ENCODE measurements at regions of chr20 and their contacts with region 1.

Region 1: GRCh38 chr20:8602389-8603116 is 466.3 kb upstream of the PLCB4 start:
- DNase-seq: no peak
- ATAC-seq: peak; percentile 68
- H3K4me3 Mint-ChIP-seq: peak overlapping the region; percentile 82
- H3K27ac Mint-ChIP-seq: peak overlapping the region; percentile 90
- H3K4me1 Mint-ChIP-seq: peaks cover 29% of the 10 kb centered on the region
- H3K27me3 Mint-ChIP-seq: no peaks in the 10 kb centered on the region
- CTCF ChIP-seq: no peak

Region 2: GRCh38 chr20:8399947-8400346 is 202.6 kb before region 1 on chr20:
- CTCF ChIA-PET with region 1: no interaction called
- POLR2A ChIA-PET with region 1: no interaction called
- intact Hi-C with region 1: loop called (anchors 5 kb)
- DNase-seq: no peak
- ATAC-seq: peak; percentile 91
- H3K4me3 Mint-ChIP-seq: no peak overlapping the region
- H3K27ac Mint-ChIP-seq: no peak overlapping the region
- H3K4me1 Mint-ChIP-seq: peaks cover 15% of the 10 kb centered on the region
- H3K27me3 Mint-ChIP-seq: no peaks in the 10 kb centered on the region
- CTCF ChIP-seq: no peak

Region 3: GRCh38 chr20:8547035-8547650 is 55.4 kb before region 1 on chr20:
- CTCF ChIA-PET with region 1: no interaction called
- POLR2A ChIA-PET with region 1: no interaction called
- intact Hi-C with region 1: no loop called
- DNase-seq: no peak
- ATAC-seq: no peak
- H3K4me3 Mint-ChIP-seq: no peak overlapping the region
- H3K27ac Mint-ChIP-seq: no peak overlapping the region
- H3K4me1 Mint-ChIP-seq: no peaks in the 10 kb centered on the region
- H3K27me3 Mint-ChIP-seq: no peaks in the 10 kb centered on the region
- CTCF ChIP-seq: no peak